ENCODE measurements at regions of chr20 and their contacts with region 1.

Region 1: DNA sequence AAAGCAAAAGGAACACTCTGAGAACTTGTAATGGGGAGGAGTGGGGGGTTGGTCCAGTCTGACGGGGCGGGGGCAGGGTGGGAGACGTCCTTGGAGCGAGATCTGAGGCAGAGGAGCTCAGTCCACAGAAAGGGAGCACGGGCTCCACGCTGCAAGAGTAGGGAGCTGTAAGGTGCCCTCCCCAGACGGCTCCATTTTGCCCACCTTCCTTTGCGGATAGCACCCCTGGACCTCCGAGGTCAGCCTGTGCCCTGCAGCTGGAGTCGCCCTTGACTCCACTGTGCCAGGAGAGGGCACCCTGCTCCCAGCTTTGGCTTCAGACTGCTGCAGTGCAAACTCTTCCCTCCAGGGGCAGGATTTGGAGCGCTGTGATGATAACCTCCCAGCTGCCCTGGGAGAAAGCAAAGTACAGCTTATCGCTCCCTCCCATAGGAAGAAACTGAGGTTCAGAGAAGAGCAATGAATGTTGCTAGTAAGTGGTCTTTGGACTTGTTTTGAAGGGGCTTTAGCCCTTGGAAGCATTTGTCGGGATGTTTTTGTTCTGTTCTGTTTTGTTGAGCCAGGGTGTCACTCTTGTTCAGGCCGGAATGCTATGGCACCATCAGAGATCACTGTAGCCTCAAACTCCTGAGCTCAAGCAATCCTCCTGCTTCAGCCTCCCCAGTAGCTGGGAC is 9.5 kb upstream of the AHCY start:
- DNase-seq: no peak
- H3K4me3 ChIP-seq: peak overlapping the region; percentile 51
- CTCF ChIP-seq: peak; percentile 100

Region 2: GRCh38 chr20:34350095-34350494 is 37.4 kb after region 1 on chr20:
- CTCF ChIA-PET with region 1: interaction called, 15 read pairs
- POLR2A ChIA-PET with region 1: no interaction called
- DNase-seq: no peak
- H3K4me3 ChIP-seq: no peak overlapping the region
- CTCF ChIP-seq: no peak

Region 3: DNA sequence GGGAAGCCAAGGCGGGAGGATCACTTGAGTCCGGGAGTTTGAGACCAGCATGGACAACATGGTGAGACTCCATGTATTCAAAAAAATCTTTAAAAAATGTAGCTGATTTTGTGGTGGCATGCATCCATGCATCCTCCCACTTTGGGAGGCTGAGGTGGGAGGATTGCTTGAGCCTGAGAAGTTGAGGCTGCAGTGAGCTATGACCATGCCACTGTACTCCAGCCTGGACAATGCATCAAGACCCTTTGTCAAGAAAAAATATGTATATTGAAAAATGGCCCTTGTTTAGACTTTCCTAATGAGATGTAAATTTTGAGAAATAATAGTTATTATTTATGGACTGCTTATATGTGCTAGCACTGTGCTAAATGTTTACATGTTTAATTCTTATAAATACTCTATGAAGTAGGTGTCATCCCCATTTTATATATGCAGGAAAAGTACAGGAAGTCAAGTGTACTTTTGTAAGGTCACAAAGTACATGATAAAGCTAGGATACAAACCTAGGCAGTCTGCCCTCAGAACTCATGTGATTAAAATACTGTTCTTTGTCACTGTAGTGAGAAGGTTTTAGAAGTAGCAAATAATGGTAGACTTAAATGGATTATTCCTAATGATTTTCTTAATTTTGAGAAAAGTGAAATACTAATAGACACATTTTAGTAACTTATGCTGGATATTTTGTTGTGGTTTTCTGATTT is 109.2 kb after region 1 on chr20:
- CTCF ChIA-PET with region 1: interaction called, 17 read pairs
- POLR2A ChIA-PET with region 1: no interaction called
- DNase-seq: no peak
- H3K4me3 ChIP-seq: no peak overlapping the region
- CTCF ChIP-seq: no peak

Region 4: GRCh38 chr20:34452281-34452982 is 139.8 kb after region 1 on chr20:
- CTCF ChIA-PET with region 1: interaction called, 29 read pairs
- POLR2A ChIA-PET with region 1: no interaction called
- DNase-seq: peak; percentile 24
- H3K4me3 ChIP-seq: no peak overlapping the region
- CTCF ChIP-seq: no peak

Region 5: GRCh38 chr20:34493646-34494045 is 181.0 kb after region 1 on chr20:
- CTCF ChIA-PET with region 1: interaction called, 30 read pairs
- POLR2A ChIA-PET with region 1: no interaction called
- DNase-seq: no peak
- H3K4me3 ChIP-seq: no peak overlapping the region
- CTCF ChIP-seq: no peak

Region 6: DNA sequence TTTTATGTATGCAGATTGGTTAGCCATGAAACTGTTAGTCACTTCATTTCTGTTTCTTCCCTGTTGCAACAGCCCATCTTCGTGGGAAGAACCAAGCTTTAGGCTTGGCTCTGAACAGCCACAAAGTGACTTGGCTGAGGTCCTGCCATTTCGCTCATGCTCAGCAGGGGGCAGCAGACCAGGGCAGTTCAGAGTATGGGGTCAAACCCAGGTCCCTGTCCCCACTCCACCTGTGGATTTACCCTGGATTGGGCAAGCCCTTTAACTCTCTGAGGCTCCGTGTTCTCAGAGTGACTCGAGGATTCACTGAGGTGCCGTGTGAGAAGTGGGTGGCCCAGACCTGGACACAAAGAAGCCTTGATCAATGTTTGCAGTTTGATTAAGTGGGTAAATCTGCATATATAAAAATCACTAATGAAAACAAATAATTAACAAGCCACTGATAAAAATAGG is 226.0 kb after region 1 on chr20:
- CTCF ChIA-PET with region 1: interaction called, 32 read pairs
- POLR2A ChIA-PET with region 1: no interaction called
- DNase-seq: no peak
- H3K4me3 ChIP-seq: no peak overlapping the region
- CTCF ChIP-seq: peak; percentile 89

Region 7: GRCh38 chr20:34768096-34768495 is 455.4 kb after region 1 on chr20:
- CTCF ChIA-PET with region 1: interaction called, 49 read pairs
- POLR2A ChIA-PET with region 1: interaction called, 3 read pairs
- DNase-seq: peak; percentile 33
- H3K4me3 ChIP-seq: no peak overlapping the region
- CTCF ChIP-seq: no peak

Region 8: DNA sequence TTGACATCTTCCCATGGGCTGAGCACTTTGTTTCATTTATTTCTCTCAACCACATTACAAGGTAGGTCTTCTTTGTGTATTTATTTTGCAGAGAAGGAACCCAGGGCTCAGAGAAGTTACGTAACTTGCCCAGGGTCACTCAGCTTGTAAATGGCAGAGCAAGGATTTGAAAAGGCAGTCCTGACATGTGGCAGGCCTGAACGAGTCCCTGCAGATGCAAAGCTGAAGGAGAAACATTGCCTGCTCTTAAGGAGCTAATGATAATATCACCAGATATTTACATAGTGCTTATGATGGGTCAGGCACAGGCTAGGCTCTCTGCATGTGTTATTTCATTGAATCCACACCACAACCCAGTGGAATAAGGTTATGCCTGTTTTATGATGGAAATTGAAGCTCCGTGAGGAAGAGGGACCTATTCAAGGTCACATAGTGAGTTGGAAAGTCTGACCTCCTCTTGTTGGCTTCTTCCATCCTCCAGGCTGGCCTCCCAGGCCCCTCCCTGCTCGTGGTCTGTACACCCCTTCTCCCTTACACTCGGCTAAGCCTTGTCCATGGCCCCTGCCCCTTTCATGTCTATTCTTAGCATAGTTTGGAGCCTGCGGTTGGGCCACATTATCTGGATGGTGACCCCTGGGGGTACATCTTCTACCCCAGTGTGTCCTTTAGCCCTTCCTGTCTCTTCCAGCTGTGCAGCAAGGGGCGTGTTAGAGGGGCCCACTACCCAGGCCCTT is 655.5 kb after region 1 on chr20:
- CTCF ChIA-PET with region 1: no interaction called
- POLR2A ChIA-PET with region 1: no interaction called
- DNase-seq: no peak
- H3K4me3 ChIP-seq: no peak overlapping the region
- CTCF ChIP-seq: no peak

Measured in AG04449 (cell line).